Naive thymus-derived CD4-positive, alpha-beta T cell (primary cell): ENCODE measurements at regions of chr1 and their contacts with region 1.

Region 1: GRCh38 chr1:30232288-30232899 is 491.0 kb downstream of the MATN1 start:
- DNase-seq: no peak
- ATAC-seq: no peak
- H3K4me3 ChIP-seq: no peak overlapping the region
- H3K4me3 Mint-ChIP-seq: no peak overlapping the region
- H3K27ac ChIP-seq: no peak overlapping the region
- H3K27ac Mint-ChIP-seq: no peak overlapping the region
- H3K4me1 ChIP-seq: no peaks in the 10 kb centered on the region
- H3K4me1 Mint-ChIP-seq: peaks cover 0 to 1% (median 0%) of the 10 kb centered on the region in 7 donors
- H3K27me3 ChIP-seq: no peaks in the 10 kb centered on the region
- H3K27me3 Mint-ChIP-seq: peaks cover 6 to 28% (median 14%) of the 10 kb centered on the region in 5 donors

Region 2: DNA sequence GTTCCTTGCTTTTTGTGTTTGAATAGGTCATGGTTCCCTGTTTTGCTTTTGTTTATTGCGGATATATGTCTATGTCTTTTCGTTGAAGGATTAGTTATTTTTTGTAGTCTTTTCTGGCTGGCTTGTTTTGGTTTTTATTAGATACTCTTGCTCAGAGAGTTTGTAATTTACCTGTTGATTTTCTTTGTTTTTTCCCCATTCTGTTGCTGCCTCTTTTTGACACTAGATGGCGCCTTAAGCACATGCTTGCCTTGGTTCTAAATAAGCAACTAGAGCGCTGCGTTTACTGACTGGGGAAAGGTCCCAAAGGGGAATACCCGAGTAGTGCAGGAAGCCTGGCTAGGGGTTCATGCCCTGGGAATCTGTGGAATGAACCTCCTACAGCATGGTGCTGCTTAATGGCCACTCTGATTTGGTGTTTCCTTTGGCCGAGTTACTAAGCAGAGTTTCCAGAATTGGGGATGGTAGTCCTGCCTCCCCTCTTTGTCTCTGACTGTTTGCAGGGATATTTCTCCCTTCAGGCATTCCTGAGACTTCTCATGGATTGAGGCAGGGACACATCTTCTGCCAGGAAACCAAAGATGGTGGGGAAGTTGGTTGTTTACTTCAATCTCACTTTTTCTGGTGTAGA is 852.8 kb before region 1 on chr1:
- CTCF ChIA-PET with region 1: no interaction called
- POLR2A ChIA-PET with region 1: no interaction called
- intact Hi-C with region 1: loop called in 1 of 2 experiments (anchors 10 kb)
- DNase-seq: no peak
- ATAC-seq: no peak
- H3K4me3 ChIP-seq: no peak overlapping the region
- H3K4me3 Mint-ChIP-seq: no peak overlapping the region
- H3K27ac ChIP-seq: no peak overlapping the region
- H3K27ac Mint-ChIP-seq: no peak overlapping the region
- H3K4me1 ChIP-seq: no peaks in the 10 kb centered on the region
- H3K4me1 Mint-ChIP-seq: no peaks in the 10 kb centered on the region
- H3K27me3 ChIP-seq: no peaks in the 10 kb centered on the region
- H3K27me3 Mint-ChIP-seq: peaks cover 18 to 63% (median 58%) of the 10 kb centered on the region in 5 donors

Region 3: GRCh38 chr1:29793101-29793546 is 439.3 kb before region 1 on chr1:
- CTCF ChIA-PET with region 1: no interaction called
- POLR2A ChIA-PET with region 1: no interaction called
- intact Hi-C with region 1: loop called in 1 of 2 experiments (anchors 2 kb)
- DNase-seq: peak in 6 of 9 donors; percentile 6 to 74 (median 15)
- ATAC-seq: peak; percentile 52
- H3K4me3 ChIP-seq: no peak overlapping the region
- H3K4me3 Mint-ChIP-seq: no peak overlapping the region
- H3K27ac ChIP-seq: no peak overlapping the region
- H3K27ac Mint-ChIP-seq: no peak overlapping the region
- H3K4me1 ChIP-seq: no peaks in the 10 kb centered on the region
- H3K4me1 Mint-ChIP-seq: peaks cover 0 to 4% (median 0%) of the 10 kb centered on the region in 7 donors
- H3K27me3 ChIP-seq: no peaks in the 10 kb centered on the region
- H3K27me3 Mint-ChIP-seq: peaks cover 0 to 28% (median 6%) of the 10 kb centered on the region in 5 donors

Region 4: DNA sequence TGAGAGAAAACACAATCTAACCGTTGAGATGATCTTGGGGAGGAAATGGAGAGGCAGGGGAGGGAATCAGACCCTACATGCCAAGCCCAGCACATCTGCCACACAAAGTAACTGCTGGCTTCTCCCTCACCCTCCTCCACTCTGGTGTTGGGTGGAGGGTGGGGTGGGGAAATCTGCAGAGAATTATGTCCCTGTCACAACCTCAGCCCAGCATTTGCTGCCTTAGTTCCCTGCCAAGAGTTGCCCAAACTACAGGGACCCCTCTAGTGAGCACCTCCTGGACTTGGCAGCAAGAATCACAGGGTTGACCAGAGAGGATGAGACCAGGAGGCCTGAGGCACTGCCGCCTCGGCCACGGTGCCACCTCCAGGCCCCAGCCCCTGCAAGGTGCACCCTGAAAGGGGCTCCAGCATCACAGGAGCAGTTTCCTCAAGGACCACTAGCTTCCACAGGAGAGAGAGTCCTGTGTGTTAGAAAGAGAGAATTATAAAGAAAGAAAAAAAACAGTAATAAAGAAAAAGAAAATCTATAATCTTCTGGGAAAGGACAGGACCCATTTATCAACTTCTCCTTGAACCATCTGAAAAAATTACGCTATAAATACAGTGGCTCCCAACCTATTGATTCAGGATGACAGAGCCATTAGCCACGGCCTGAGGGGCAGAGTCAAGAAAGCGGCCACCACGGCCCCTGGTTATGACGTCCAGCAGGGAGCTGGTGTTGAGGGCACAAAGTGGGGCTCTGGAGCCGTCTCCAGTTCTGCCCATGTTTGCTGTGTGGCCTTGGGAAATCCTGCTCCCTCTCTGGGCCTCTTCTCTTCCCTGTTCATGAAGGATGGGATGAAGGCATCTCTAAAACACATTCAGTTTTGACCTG is 39.2 kb after region 1 on chr1:
- CTCF ChIA-PET with region 1: no interaction called
- POLR2A ChIA-PET with region 1: no interaction called
- intact Hi-C with region 1: no loop called
- DNase-seq: no peak
- ATAC-seq: no peak
- H3K4me3 ChIP-seq: no peak overlapping the region
- H3K4me3 Mint-ChIP-seq: no peak overlapping the region
- H3K27ac ChIP-seq: no peak overlapping the region
- H3K27ac Mint-ChIP-seq: no peak overlapping the region
- H3K4me1 ChIP-seq: no peaks in the 10 kb centered on the region
- H3K4me1 Mint-ChIP-seq: peaks cover 0 to 1% (median 0%) of the 10 kb centered on the region in 7 donors
- H3K27me3 ChIP-seq: no peaks in the 10 kb centered on the region
- H3K27me3 Mint-ChIP-seq: peaks cover 0 to 14% (median 9%) of the 10 kb centered on the region in 5 donors